ENCODE measurements at regions of chr2 and their contacts with region 1.

Region 1: DNA sequence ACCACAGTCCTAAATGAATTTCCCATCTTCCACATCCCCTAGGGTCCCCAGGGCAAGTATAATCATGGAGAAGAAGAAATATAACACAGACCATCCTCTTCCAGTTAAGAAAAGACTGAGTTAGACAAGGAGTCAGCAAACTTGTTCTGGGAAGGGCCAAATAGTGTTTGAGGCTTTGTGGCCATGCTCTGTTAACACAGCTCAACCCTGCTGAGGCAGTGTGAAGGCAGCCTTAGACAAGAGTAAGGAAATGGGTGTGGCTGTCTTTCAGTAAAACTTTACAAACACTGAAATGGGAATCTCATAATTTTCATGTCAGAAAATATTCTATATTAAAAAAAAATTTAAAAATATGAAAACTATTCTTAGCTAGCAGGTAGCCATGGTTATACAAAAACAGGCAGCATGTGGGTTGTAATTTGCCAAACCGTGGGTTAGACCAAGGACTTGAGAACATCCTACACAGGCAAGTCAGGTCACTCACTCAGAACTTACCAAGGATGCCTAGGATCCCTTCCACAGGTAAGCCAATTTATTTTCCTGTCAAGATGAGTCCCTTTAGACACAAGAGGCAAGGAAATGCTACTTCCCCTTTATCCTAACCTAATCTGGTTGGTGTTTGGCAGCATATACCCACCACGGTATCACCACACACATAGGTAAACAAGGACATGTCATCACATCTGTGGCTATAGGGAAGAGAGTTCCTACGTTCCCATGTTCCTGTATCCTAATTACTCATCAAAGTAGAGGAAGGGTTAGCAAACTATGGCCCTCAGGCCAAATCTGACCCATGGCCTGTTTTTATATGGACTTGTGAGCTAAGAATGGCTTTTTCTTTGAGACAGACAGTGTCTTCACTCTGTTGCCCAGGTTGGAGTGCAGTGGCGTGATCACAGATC is 31.9 kb downstream of the C2orf74 start:
- DNase-seq: peak in 3 of 35 experiments; percentile 15 to 29 (median 27)
- ATAC-seq: peak; percentile 36 to 65 (median 50)
- H3K4me3 ChIP-seq: no peak overlapping the region
- H3K4me3 Mint-ChIP-seq: no peak overlapping the region
- H3K27ac ChIP-seq: peak overlapping the region; percentile 63
- H3K27ac Mint-ChIP-seq: peak overlapping the region; percentile 65 to 82
- H3K4me1 ChIP-seq: peaks cover 0 to 14% of the 10 kb centered on the region in 2 experiments
- H3K4me1 Mint-ChIP-seq: peaks cover 0 to 26% (median 18%) of the 10 kb centered on the region in 3 donors
- H3K27me3 ChIP-seq: no peaks in the 10 kb centered on the region
- H3K27me3 Mint-ChIP-seq: no peaks in the 10 kb centered on the region

Region 2: GRCh38 chr2:61177727-61178549 is 16.0 kb before region 1 on chr2:
- CTCF ChIA-PET with region 1: interaction called in 1 of 2 experiments, 4 read pairs
- POLR2A ChIA-PET with region 1: interaction called in 1 of 2 experiments, 11 read pairs
- DNase-seq: peak in 32 of 35 experiments; percentile 6 to 59 (median 28)
- ATAC-seq: peak; percentile 23 to 41 (median 35)
- H3K4me3 ChIP-seq: peak overlapping the region; percentile 60 to 74
- H3K4me3 Mint-ChIP-seq: peak overlapping the region; percentile 84 to 90 (median 86)
- H3K27ac ChIP-seq: peak overlapping the region; percentile 85
- H3K27ac Mint-ChIP-seq: peak overlapping the region; percentile 96
- H3K4me1 ChIP-seq: peaks cover 14 to 57% of the 10 kb centered on the region in 2 experiments
- H3K4me1 Mint-ChIP-seq: peaks cover 55 to 63% (median 57%) of the 10 kb centered on the region in 3 donors
- H3K27me3 ChIP-seq: no peaks in the 10 kb centered on the region
- H3K27me3 Mint-ChIP-seq: no peaks in the 10 kb centered on the region

Measured in T-cell (primary cell).